Naive thymus-derived CD4-positive, alpha-beta T cell (primary cell): ENCODE measurements at regions of chr13 and their contacts with region 1.

Region 1: DNA sequence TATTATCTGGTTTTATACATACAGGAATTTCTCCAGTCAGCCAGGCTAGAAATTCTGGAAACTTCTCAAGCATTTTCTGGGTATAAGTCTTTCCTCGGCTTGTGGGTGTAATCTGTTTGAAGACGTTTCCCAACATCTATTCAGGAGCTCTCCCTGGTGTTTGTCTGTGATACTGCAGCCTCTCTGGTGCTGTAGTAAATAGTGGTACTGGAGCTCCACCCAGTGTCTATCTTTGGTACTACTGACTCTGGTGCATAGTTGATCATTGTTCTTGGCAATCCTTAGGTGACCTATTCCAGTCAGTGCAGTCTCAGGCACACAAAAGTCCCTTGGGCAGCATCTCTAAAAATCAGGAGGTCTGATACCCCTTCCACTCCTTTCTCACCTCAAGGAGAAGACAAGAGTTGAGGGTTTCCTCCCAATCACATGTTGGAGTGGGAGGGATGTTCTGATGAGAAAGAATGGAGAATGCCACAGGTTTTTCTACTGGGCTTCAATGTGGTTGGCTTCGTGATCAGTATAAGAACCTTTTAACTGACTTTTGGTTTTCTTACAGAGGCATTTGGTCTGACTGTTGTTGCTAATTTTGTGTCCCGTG is 115.5 kb downstream of the CYSLTR2 start:
- DNase-seq: peak; percentile 44 to 87 (median 82)
- ATAC-seq: peak; percentile 100
- H3K4me3 ChIP-seq: no peak overlapping the region
- H3K4me3 Mint-ChIP-seq: peak overlapping the region in 1 of 10 donors; percentile 4
- H3K27ac ChIP-seq: no peak overlapping the region
- H3K27ac Mint-ChIP-seq: peak overlapping the region in 1 of 9 donors; percentile 0
- H3K4me1 ChIP-seq: no peaks in the 10 kb centered on the region
- H3K4me1 Mint-ChIP-seq: peaks cover 0 to 16% (median 5%) of the 10 kb centered on the region in 7 donors
- H3K27me3 ChIP-seq: no peaks in the 10 kb centered on the region
- H3K27me3 Mint-ChIP-seq: peaks cover 4 to 46% (median 17%) of the 10 kb centered on the region in 5 donors

Region 2: GRCh38 chr13:48037346-48038173 is 731.6 kb before region 1 on chr13 and contains the start of gene NUDT15:
- CTCF ChIA-PET with region 1: no interaction called
- POLR2A ChIA-PET with region 1: no interaction called
- intact Hi-C with region 1: loop called (anchors 1 kb)
- DNase-seq: peak; percentile 93 to 98 (median 97)
- ATAC-seq: peak; percentile 96
- H3K4me3 ChIP-seq: peak within 1 kb of the TSS; percentile 90
- H3K4me3 Mint-ChIP-seq: peak within 1 kb of the TSS; percentile 82 to 98 (median 95)
- H3K27ac ChIP-seq: peak within 1 kb of the TSS; percentile 91
- H3K27ac Mint-ChIP-seq: peak within 1 kb of the TSS; percentile 96 to 100 (median 97)
- H3K4me1 ChIP-seq: peaks cover 14 to 15% of the 10 kb centered on the region in 2 donors
- H3K4me1 Mint-ChIP-seq: peaks cover 15 to 52% (median 40%) of the 10 kb centered on the region in 7 donors
- H3K27me3 ChIP-seq: no peaks in the 10 kb centered on the region
- H3K27me3 Mint-ChIP-seq: no peaks in the 10 kb centered on the region
- total RNA-seq, gene NUDT15: 4.3 to 13.6 (median 8.7) TPM

Region 3: DNA sequence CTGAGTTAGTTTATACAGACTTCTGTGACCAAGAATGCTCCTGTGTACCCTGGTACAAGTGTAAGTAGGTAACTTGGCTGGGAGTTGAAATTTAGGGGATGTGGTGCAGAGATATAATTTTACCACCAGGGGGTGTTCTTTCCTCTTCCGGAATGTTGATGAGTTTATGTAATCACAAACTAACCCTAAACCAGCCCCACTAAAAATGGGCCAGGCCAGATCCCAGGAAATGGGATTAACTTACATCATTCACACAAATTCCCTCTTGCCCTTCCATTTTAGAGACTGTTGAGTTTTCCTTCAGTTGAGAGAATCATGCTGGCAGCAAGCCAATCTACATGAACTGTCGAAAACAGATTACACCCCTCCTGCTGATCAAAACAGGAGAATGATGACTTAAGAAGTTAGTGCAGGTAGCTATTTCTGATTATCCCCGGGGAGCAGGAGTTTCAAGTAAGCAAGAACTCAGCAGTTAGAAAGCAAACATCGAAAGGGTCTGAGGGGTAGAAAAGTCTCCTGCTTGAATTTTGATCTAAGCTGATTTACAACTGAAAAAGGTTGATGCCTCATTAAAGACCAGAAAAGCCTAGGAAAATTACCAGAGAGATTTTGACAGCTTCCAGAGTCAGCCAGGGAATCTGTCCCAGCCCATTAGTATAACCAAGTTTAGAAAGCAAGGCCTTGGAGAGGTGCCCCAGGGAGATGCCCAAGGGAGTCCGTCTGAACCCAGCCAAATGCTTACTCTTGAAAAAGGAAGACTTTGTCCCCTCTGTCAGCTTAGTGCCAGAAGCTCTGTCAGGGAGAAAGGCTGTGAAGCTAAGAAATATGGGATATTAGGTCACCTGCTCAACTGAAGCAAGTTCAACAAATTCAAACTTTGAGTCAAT is 642.0 kb before region 1 on chr13:
- CTCF ChIA-PET with region 1: no interaction called
- POLR2A ChIA-PET with region 1: no interaction called
- intact Hi-C with region 1: loop called (anchors 1 kb)
- DNase-seq: peak in 8 of 9 donors; percentile 20 to 84 (median 80)
- ATAC-seq: peak; percentile 96
- H3K4me3 ChIP-seq: no peak overlapping the region
- H3K4me3 Mint-ChIP-seq: peak overlapping the region in 9 of 10 donors; percentile 25 to 69 (median 52)
- H3K27ac ChIP-seq: peak overlapping the region; percentile 54
- H3K27ac Mint-ChIP-seq: peak overlapping the region in 8 of 9 donors; percentile 83 to 95 (median 89)
- H3K4me1 ChIP-seq: peaks cover 5 to 15% of the 10 kb centered on the region in 2 donors
- H3K4me1 Mint-ChIP-seq: peaks cover 14 to 42% (median 35%) of the 10 kb centered on the region in 7 donors
- H3K27me3 ChIP-seq: no peaks in the 10 kb centered on the region
- H3K27me3 Mint-ChIP-seq: peaks cover 0 to 3% (median 0%) of the 10 kb centered on the region in 5 donors

Region 4: DNA sequence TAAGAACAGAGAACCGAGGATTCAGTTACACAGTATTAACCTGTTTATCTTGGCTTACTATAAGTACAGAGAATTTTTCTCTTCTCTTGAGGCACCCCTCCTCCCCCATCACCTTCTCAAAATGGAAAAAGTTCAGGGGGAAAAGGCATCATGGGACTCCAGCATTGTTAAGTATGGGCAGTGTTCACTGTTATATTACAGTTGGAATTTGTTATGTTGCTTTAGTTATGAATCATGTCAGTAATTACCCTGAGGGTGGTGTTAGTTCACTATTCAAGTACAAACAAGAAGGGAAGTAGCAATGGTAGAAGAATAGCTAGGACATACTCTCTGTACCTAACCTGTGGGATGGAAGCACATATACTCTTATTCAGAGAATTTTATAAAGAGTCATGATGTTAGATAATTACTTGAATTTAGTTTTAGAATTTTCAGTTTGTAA is 368.3 kb before region 1 on chr13:
- CTCF ChIA-PET with region 1: no interaction called
- POLR2A ChIA-PET with region 1: no interaction called
- intact Hi-C with region 1: loop called (anchors 1 to 2 kb)
- DNase-seq: peak in 2 of 9 donors; percentile 36 to 42
- ATAC-seq: peak; percentile 74
- H3K4me3 ChIP-seq: no peak overlapping the region
- H3K4me3 Mint-ChIP-seq: peak overlapping the region; percentile 1 to 83 (median 54)
- H3K27ac ChIP-seq: peak overlapping the region; percentile 49
- H3K27ac Mint-ChIP-seq: peak overlapping the region; percentile 1 to 90 (median 50)
- H3K4me1 ChIP-seq: peaks cover 33 to 40% of the 10 kb centered on the region in 2 donors
- H3K4me1 Mint-ChIP-seq: peaks cover 23 to 78% (median 63%) of the 10 kb centered on the region in 7 donors
- H3K27me3 ChIP-seq: no peaks in the 10 kb centered on the region
- H3K27me3 Mint-ChIP-seq: no peaks in the 10 kb centered on the region

Region 5: DNA sequence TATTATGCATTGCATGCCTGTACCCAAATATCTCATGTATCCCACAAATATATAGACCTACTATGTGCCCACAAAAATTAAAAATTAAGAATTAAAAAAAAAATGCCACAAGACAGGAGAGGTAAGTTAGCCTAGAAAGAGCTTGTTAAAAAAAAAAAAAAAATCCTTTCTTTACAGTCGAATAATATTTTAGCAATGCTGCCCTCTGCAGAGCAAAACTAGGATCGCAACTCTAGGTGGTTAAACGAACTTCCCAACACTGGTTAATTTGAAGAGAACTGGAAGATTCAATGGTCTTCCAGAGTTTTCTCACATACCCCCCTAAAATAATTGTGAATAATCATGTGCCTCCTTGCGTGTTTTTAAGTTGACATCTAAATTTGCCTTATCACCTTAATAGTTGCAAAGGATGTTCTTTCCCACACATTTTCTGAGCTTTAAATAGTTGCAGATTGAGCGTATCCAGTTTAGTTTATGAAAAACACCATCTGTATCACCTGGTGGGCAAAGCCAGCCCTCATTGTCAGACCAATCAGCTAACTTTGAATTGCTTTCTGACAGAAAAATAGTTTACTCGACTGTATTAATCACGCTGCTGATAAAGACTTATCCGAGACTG is 188.9 kb before region 1 on chr13:
- CTCF ChIA-PET with region 1: interaction called, 4 read pairs
- POLR2A ChIA-PET with region 1: no interaction called
- intact Hi-C with region 1: loop called (anchors 1 to 5 kb)
- DNase-seq: peak; percentile 44 to 79 (median 61)
- ATAC-seq: peak; percentile 84
- H3K4me3 ChIP-seq: no peak overlapping the region
- H3K4me3 Mint-ChIP-seq: no peak overlapping the region
- H3K27ac ChIP-seq: no peak overlapping the region
- H3K27ac Mint-ChIP-seq: no peak overlapping the region
- H3K4me1 ChIP-seq: peaks cover 0 to 6% of the 10 kb centered on the region in 2 donors
- H3K4me1 Mint-ChIP-seq: peaks cover 0 to 25% (median 6%) of the 10 kb centered on the region in 7 donors
- H3K27me3 ChIP-seq: no peaks in the 10 kb centered on the region
- H3K27me3 Mint-ChIP-seq: peaks cover 0 to 68% (median 3%) of the 10 kb centered on the region in 5 donors

Region 6: DNA sequence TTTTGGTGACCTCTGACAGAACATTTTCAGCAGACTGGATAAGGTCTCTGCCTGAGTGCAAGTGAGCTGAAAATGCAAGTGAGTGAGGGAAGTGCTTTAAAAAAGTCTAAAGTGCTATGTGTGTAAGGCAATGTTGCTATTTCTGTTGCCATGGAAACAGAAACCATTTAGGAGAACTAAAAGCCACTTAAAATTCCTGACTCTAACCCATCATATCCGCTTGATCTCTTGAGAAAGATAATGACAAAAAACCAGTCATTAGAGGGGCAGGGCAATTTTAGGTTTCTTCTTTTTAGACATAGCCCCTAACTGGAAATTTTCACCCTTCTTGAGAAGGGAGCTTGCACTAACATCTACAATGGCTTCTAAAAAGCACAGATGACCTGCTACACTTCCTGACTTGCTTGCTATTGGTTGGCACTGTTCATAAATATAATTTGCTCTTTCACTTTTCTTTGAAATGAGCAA is 115.7 kb before region 1 on chr13 and contains the start of gene CYSLTR2:
- CTCF ChIA-PET with region 1: no interaction called
- POLR2A ChIA-PET with region 1: no interaction called
- intact Hi-C with region 1: loop called in 1 of 2 experiments (anchors 2 kb)
- DNase-seq: peak in 7 of 9 donors; percentile 63 to 89 (median 81)
- ATAC-seq: peak; percentile 89
- H3K4me3 ChIP-seq: peak within 1 kb of the TSS; percentile 49
- H3K4me3 Mint-ChIP-seq: peak within 1 kb of the TSS; percentile 77 to 98 (median 86)
- H3K27ac ChIP-seq: peak within 1 kb of the TSS; percentile 82
- H3K27ac Mint-ChIP-seq: peak within 1 kb of the TSS; percentile 86 to 99 (median 94)
- H3K4me1 ChIP-seq: peaks cover 11 to 26% of the 10 kb centered on the region in 2 donors
- H3K4me1 Mint-ChIP-seq: peaks cover 22 to 65% (median 56%) of the 10 kb centered on the region in 7 donors
- H3K27me3 ChIP-seq: no peaks in the 10 kb centered on the region
- H3K27me3 Mint-ChIP-seq: peaks cover 0 to 2% (median 0%) of the 10 kb centered on the region in 5 donors
- total RNA-seq, gene CYSLTR2: 2.1 to 6.5 (median 3.5) TPM